ENCODE measurements at regions of chr2 and their contacts with region 1.

Region 1: DNA sequence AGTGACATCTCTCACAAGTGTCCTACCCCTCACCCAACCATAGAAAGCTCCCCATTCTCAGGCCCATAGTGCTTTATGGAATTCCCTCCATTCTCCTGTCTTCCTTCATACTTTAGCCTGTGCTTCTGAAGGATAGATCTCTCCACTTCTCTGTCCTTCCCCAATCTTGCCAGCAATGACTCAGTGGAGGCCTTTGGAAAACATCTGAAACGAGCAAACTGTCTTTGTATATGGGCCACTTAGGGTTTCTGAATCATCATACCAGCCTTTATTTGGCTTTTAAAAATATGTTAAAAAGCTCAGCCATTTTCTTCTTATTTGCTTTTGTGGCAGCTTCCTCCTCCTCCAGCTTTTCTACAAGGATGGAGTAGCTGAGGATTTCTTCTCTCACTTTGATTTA is 65.6 kb upstream of the ZNF385B start:
- DNase-seq: no peak
- ATAC-seq: no peak
- H3K4me3 ChIP-seq: no peak overlapping the region
- H3K27ac ChIP-seq: no peak overlapping the region
- H3K4me1 ChIP-seq: no peaks in the 10 kb centered on the region
- H3K27me3 ChIP-seq: no peaks in the 10 kb centered on the region
- CTCF ChIP-seq: no peak
- POLR2A ChIP-seq: no peak

Region 2: GRCh38 chr2:179830043-179830787 is 96.8 kb before region 1 on chr2:
- intact Hi-C with region 1: loop called in 1 of 10 experiments (anchors 5 kb)
- DNase-seq: no peak
- ATAC-seq: no peak
- H3K4me3 ChIP-seq: no peak overlapping the region
- H3K27ac ChIP-seq: no peak overlapping the region
- H3K4me1 ChIP-seq: no peaks in the 10 kb centered on the region
- H3K27me3 ChIP-seq: peaks cover 0 to 7% (median 0%) of the 10 kb centered on the region in 9 donors
- CTCF ChIP-seq: no peak
- POLR2A ChIP-seq: no peak

Measured in heart left ventricle (tissue), 16 donors.